Cardiac septum (tissue), 1 donor: ENCODE measurements at regions of chr9 and their contacts with region 1.

Region 1: GRCh38 chr9:121609845-121610570 is 41.4 kb upstream of the DAB2IP start:
- DNase-seq: no peak

Region 2: DNA sequence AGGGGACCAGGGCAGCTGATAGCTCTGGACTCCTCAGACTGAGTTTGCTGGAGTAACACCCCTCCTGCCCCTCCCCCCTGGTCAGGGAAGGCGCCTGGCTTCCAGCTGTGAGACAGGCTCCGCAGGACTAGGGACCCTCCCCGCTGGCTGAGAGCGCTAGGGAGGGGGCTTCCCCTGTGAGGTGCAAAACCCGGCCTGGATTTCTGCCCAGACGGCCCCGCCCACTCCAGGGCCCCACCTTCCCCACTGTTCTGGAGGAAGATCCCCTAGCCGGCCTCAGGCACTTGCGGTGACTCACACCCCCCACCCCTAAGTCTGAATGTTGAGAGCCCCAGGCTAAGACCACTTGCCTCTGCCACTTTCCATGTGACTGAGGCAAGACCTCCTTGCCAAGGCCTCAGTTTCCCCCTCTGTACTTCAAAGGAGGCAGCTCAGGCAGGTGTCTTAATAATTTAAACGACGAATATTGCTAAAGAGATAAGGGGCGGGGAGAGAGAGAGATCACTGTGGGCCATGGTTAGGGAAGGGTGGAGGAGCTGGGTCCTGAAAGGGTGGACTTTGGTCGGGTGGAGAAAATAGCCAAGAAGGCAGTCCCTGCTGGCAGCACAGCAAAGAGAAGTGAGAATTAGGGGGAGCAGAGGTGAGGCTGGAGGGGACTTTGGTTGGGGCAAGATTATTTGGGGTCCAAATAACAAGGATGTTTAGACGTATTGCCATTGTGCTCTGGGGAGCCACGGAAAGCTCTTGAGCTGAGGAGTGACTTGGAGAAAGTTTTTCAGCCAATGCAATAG is 40.4 kb after region 1 on chr9:
- intact Hi-C with region 1: loop called (anchors 5 kb)
- DNase-seq: no peak

Region 3: GRCh38 chr9:121779381-121780117 is 169.5 kb after region 1 on chr9:
- intact Hi-C with region 1: no loop called
- DNase-seq: peak; percentile 76